Aorta (tissue), 5 donors: ENCODE measurements at regions of chr9 and their contacts with region 1.

Region 1: GRCh38 chr9:128420060-128420650 is 502 bp upstream of the CERCAM start:
- DNase-seq: peak; percentile 82 to 94
- ATAC-seq: peak; percentile 92
- H3K4me3 ChIP-seq: peak overlapping the region; percentile 78 to 87
- H3K27ac ChIP-seq: peak overlapping the region in 1 of 2 donors; percentile 13
- H3K4me1 ChIP-seq: no peaks in the 10 kb centered on the region
- H3K27me3 ChIP-seq: no peaks in the 10 kb centered on the region

Region 2: GRCh38 chr9:128361986-128362646 is 58.0 kb before region 1 on chr9:
- intact Hi-C with region 1: loop called in 1 of 2 experiments (anchors 5 kb)
- DNase-seq: peak; percentile 90 to 91
- ATAC-seq: peak; percentile 94
- H3K4me3 ChIP-seq: no peak overlapping the region
- H3K27ac ChIP-seq: no peak overlapping the region
- H3K4me1 ChIP-seq: no peaks in the 10 kb centered on the region
- H3K27me3 ChIP-seq: no peaks in the 10 kb centered on the region